K562 (cell line): ENCODE measurements at regions of chr2 and their contacts with region 1.

Region 1: GRCh38 chr2:190648289-190649034 is 421 bp upstream of the NAB1 start:
- DNase-seq: peak; percentile 85 to 86 (median 86)
- ATAC-seq: peak; percentile 84
- H3K4me3 ChIP-seq: peak overlapping the region; percentile 56
- H3K27ac ChIP-seq: peak overlapping the region; percentile 74
- H3K4me1 ChIP-seq: peaks cover 14 to 15% of the 10 kb centered on the region in 2 experiments; a peak in 4 of 5 replicates
- H3K27me3 ChIP-seq: no peaks in the 10 kb centered on the region
- CTCF ChIP-seq: no peak
- EP300 ChIP-seq: no peak
- POLR2A ChIP-seq: peak; percentile 43
- RAD21 ChIP-seq: no peak

Region 2: GRCh38 chr2:189521699-189522434 is 1126.6 kb before region 1 on chr2:
- CTCF ChIA-PET with region 1: no interaction called
- POLR2A ChIA-PET with region 1: no interaction called
- in situ Hi-C with region 1: no loop called
- intact Hi-C with region 1: no loop called
- DNase-seq: peak; percentile 12 to 58 (median 19)
- ATAC-seq: peak; percentile 65
- H3K4me3 ChIP-seq: no peak overlapping the region
- H3K27ac ChIP-seq: no peak overlapping the region
- H3K4me1 ChIP-seq: peaks cover 0 to 37% of the 10 kb centered on the region in 2 experiments
- H3K27me3 ChIP-seq: no peaks in the 10 kb centered on the region
- CTCF ChIP-seq: peak in 2 of 3 experiments; percentile 14 to 19; a peak in 1 of 6 replicates
- EP300 ChIP-seq: peak; percentile 30; the same call in 1 of the 2 replicates
- POLR2A ChIP-seq: no peak
- RAD21 ChIP-seq: no peak

Region 3: DNA sequence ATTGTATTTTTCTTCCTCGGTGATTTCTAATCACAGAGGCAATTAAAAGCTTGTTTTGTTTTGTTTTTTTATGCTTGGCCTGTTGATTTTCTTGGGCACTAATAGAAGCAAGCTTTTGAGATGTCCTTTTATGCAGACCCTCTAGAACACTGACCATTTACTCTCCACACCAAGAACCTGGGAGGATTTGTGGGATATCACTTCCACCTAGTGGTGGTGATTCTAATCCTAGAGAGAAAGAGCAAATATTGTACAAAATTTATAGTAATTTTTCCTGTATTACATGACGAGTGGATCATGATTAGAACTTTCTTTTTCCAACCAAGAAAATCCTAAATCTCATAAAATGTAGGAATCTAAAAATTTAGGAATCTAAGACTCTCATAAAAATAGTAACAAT is 137.4 kb before region 1 on chr2:
- CTCF ChIA-PET with region 1: no interaction called
- POLR2A ChIA-PET with region 1: no interaction called
- in situ Hi-C with region 1: no loop called
- intact Hi-C with region 1: no loop called
- DNase-seq: peak in 2 of 4 experiments; percentile 43 to 58
- ATAC-seq: peak; percentile 86
- H3K4me3 ChIP-seq: no peak overlapping the region
- H3K27ac ChIP-seq: no peak overlapping the region
- H3K4me1 ChIP-seq: no peaks in the 10 kb centered on the region; a peak in 2 of 5 replicates
- H3K27me3 ChIP-seq: no peaks in the 10 kb centered on the region
- CTCF ChIP-seq: peak; percentile 44 to 69 (median 50); a peak in 4 of 6 replicates
- EP300 ChIP-seq: no peak
- POLR2A ChIP-seq: no peak
- RAD21 ChIP-seq: peak; percentile 78 to 90

Region 4: DNA sequence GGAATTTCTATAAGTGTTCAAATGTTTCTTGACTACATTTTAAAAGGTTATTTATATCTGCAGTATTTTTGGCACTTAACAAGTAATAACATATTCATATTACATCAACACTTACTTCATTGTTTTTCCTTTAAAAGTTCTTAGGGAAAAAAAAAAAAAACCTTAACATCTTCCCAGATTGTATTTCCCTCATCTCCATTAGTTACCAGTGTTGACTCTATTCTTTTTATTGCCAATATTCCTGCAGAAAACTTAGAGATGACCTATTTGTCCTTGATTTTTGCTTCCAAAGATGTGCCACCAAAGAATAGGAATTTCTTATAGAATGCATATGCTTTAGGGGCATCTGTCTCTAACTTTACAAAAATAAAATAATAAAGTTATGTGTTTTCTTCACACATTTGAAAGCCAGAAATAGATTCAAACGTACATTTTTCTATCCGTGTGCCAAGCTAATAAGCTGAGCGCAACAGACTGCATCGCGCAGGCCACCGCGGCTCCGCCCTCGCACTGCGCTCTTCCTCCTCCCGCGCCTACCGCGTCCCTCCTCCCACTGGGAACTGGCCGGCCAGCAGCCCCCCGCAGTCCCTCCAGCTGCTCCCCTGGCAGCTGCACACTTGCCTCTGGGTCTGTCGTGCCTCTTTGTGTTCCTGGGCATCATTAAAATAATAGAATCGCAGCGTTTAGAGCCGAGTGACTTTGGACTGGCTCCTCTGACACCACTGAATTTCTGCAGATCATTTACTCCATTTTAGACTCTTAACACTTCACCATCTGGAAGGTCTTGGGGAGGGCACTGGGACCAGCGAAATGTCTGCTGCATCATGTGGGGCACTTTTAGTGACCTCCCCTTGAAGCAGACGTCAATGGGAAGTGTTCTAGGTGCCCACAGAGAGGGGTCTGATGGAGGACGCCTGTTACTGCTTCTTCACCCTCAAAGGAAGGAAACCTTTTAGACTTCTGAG is 20.7 kb before region 1 on chr2:
- CTCF ChIA-PET with region 1: no interaction called
- POLR2A ChIA-PET with region 1: interaction called, 3 read pairs
- in situ Hi-C with region 1: no loop called
- intact Hi-C with region 1: loop called (anchors 1 kb)
- DNase-seq: no peak
- ATAC-seq: no peak; the same call in 2 of the 3 replicates
- H3K4me3 ChIP-seq: no peak overlapping the region
- H3K27ac ChIP-seq: no peak overlapping the region
- H3K4me1 ChIP-seq: no peaks in the 10 kb centered on the region; a peak in 1 of 5 replicates
- H3K27me3 ChIP-seq: no peaks in the 10 kb centered on the region
- CTCF ChIP-seq: no peak
- EP300 ChIP-seq: no peak
- POLR2A ChIP-seq: no peak
- RAD21 ChIP-seq: no peak